Activated CD8-positive, alpha-beta T cell treated with anti-CD3 and anti-CD28 coated beads, Interleukin-2, amount 10 ng/mL, durations not matched to agents 7 days and 5 days (primary cell): ENCODE measurements at regions of chr10 and their contacts with region 1.

Region 1: DNA sequence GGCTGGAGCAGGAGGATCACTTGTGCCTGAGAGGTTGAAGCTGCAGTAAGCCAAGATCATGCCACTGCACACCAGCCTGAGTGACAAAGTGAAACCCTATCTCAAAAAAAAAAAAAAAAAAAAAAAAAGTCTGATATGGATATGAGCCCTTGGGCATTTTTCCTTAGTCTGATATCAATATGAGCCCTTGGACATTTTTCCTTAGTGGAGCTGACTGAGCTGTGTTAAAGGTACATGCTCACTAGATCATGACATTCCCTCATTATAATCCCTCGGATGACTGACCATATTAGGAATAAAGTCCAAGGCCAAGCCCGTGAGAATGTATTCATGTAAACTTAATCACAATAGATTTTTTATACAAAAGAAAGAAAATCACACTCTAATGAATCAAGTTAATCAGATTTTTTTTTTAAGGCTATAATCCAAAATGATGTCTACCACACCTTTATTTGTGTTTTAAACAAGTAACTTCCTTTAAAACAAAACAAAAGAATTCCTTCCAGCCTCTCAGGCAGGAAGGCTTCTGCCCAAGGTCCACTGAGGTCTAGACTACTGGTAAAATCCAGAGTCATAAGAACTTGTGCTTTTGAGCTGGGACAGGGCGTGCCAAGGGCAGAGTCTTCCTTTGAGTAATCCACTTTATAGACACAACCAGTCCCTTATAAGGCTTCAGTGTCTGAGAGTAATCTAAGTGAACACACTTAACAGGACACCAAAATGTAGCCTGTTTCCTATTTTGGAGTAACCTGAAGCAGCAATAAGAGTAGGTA is 5.5 kb downstream of the PPA1 start:
- DNase-seq: no peak
- ATAC-seq: no peak
- H3K4me3 Mint-ChIP-seq: no peak overlapping the region
- H3K27ac Mint-ChIP-seq: no peak overlapping the region
- H3K4me1 Mint-ChIP-seq: peaks cover 49% of the 10 kb centered on the region
- H3K27me3 Mint-ChIP-seq: no peaks in the 10 kb centered on the region

Region 2: DNA sequence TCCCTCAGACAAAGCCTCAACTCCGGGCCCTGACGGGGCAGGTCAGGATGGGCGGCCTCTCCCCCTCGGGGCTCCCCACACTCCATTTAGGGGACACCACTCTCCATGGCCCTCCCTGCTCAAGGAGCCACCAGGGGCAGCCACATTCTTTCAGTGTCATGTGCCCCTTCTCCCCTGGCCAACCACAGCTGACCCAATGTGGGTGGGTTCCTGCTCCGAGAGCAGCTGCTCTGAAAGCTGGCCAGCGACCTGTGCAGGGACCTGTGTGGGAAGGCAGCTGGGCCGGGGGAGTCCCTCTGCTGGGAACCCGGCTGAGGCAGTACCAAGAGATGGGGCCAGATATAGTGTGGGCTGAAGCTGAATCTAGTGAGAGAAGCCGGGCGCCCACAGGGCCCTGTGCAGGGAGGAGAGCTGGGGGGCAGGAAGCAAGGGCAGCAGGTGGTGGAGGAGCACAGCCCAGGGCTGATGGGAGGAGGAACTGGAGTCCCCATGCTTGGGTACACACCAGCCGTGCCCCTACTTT is 96.7 kb after region 1 on chr10:
- CTCF ChIA-PET with region 1: interaction called, 13 read pairs
- POLR2A ChIA-PET with region 1: no interaction called
- DNase-seq: peak; percentile 50
- ATAC-seq: peak; percentile 53
- H3K4me3 Mint-ChIP-seq: peak overlapping the region; percentile 29
- H3K27ac Mint-ChIP-seq: peak overlapping the region; percentile 96
- H3K4me1 Mint-ChIP-seq: peaks cover 55% of the 10 kb centered on the region
- H3K27me3 Mint-ChIP-seq: no peaks in the 10 kb centered on the region